Activated CD4-positive, alpha-beta memory T cell treated with anti-CD3 and anti-CD28 coated beads for 36 hours (primary cell): ENCODE measurements at regions of chr10 and their contacts with region 1.

Region 1: GRCh38 chr10:102072673-102073527 is 7.8 kb downstream of the HPS6 start:
- DNase-seq: peak; percentile 86
- H3K4me3 Mint-ChIP-seq: no peak overlapping the region
- H3K27ac Mint-ChIP-seq: no peak overlapping the region
- H3K4me1 Mint-ChIP-seq: peaks cover 6% of the 10 kb centered on the region
- H3K27me3 Mint-ChIP-seq: no peaks in the 10 kb centered on the region

Region 2: DNA sequence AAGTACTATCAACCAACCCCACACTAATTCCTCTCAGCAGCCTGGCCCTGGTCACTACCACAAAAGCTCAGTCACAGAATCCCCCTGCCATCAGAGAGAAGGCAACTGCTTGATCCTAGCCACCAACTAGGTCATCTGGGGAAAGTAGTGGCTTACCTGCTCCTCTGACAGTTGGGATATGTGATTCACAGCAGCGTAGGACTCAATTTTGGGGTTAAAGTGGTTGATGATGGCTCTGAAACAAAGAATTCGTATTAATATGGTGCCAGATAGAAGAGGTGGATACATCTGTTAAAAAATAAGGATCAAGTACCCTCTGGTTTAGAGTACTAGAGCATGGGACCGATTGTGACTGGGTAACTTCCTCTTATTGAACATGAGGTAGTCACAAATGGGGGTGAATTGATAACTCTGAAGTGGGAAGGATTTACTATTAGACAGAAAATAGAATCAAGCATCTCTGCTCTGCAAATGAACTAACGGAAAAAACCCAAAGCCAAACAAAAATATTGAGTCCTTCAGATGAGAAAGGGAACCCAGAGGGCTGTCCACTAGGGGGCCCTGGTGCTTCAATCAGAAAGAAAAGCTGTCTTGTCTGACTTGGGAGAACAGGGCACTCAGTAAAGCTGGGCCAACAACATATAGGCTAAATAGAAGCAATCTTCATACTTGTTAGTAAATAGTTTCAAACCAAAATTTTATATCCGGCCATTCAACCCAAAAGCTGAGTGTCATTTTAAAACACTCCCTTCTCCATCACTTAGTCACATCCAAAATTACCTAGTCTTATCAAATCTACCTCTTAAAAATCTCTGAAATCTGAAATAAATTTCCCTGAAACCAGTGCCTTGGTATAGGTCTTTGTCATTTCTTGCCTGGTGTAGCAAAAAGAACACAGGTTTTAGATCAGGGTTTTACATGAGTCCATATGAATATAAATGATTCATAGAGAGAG is 183.4 kb before region 1 on chr10:
- CTCF ChIA-PET with region 1: interaction called, 29 read pairs
- POLR2A ChIA-PET with region 1: interaction called, 3 read pairs
- intact Hi-C with region 1: loop called (anchors 1 kb)
- DNase-seq: peak; percentile 83
- H3K4me3 Mint-ChIP-seq: no peak overlapping the region
- H3K27ac Mint-ChIP-seq: no peak overlapping the region
- H3K4me1 Mint-ChIP-seq: no peaks in the 10 kb centered on the region
- H3K27me3 Mint-ChIP-seq: no peaks in the 10 kb centered on the region

Region 3: DNA sequence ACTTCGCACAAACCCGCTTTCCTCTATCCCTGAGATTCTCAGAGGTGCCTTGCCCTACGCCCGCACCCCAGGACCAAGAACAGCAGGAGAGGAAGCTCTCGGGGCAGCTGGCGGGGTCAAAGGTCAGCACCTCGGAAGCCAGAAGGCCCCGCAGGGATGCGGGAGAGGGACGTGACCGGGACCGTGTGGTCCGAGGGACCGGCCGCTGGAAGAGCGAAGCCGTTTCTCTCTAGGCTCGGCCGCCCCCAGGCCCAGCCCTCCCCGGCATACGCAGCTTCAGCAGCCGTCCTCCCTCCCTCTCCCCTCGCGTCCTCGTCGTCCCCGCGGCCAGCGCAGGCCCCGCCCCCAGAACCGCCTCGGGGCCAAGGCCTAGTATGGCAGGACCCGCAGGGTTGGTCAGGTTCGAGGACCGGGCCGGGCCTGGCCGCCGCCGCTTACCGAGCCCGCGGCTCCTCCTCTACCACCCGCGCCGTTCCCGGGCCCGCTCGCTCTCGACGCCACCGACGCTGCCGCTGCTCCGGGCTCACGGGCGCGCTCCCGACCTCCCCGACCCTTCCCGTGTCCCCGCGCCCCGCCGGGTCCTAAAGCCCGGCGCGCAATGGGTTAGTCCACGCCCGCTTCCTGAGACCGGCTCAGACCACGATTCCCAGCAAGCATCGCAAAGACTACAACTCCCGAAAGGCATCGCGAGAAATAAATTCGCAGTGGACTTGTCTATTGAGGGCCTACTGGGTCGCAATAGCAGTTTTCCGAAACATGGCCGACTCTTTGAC is 17.1 kb before region 1 on chr10 and contains the start of gene ARMH3:
- CTCF ChIA-PET with region 1: interaction called, 12 read pairs
- POLR2A ChIA-PET with region 1: interaction called, 3 read pairs
- intact Hi-C with region 1: no loop called
- DNase-seq: peak; percentile 95
- H3K4me3 Mint-ChIP-seq: peak within 1 kb of the TSS; percentile 93
- H3K27ac Mint-ChIP-seq: peak within 1 kb of the TSS; percentile 87
- H3K4me1 Mint-ChIP-seq: peaks cover 41% of the 10 kb centered on the region
- H3K27me3 Mint-ChIP-seq: no peaks in the 10 kb centered on the region
- total RNA-seq, gene ARMH3: 16.1 to 18.8 TPM

Region 4: DNA sequence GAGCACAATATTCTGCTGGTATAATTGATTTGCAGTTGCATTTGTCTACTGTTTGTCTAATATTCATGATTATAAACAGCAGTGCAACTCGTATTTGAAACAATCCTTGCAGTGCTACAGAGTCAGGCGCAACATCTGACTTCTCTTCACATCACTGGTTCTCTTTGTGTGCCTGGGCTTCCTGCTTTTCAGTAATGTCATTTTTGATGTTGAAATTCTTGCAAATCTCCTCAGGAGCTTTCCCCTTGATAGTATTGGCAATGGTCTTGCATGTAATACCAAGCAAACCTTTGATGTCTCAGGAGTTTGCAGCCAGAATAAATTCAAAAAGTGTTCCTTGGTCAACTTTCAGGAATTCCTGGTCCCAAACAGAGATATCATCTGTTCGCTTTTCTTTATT is 12.4 kb after region 1 on chr10:
- CTCF ChIA-PET with region 1: interaction called, 13 read pairs
- POLR2A ChIA-PET with region 1: no interaction called
- intact Hi-C with region 1: no loop called
- DNase-seq: no peak
- H3K4me3 Mint-ChIP-seq: no peak overlapping the region
- H3K27ac Mint-ChIP-seq: no peak overlapping the region
- H3K4me1 Mint-ChIP-seq: no peaks in the 10 kb centered on the region
- H3K27me3 Mint-ChIP-seq: no peaks in the 10 kb centered on the region

Region 5: GRCh38 chr10:102101152-102101551 is 28.3 kb after region 1 on chr10:
- CTCF ChIA-PET with region 1: interaction called, 15 read pairs
- POLR2A ChIA-PET with region 1: no interaction called
- intact Hi-C with region 1: no loop called
- DNase-seq: no peak
- H3K4me3 Mint-ChIP-seq: no peak overlapping the region
- H3K27ac Mint-ChIP-seq: no peak overlapping the region
- H3K4me1 Mint-ChIP-seq: peaks cover 9% of the 10 kb centered on the region
- H3K27me3 Mint-ChIP-seq: no peaks in the 10 kb centered on the region